ENCODE measurements at regions of chr3 and their contacts with region 1.

Region 1: GRCh38 chr3:194003125-194004057 is 132.6 kb upstream of the HES1 start:
- DNase-seq: peak; percentile 96
- H3K4me3 Mint-ChIP-seq: peak overlapping the region; percentile 67
- H3K27ac Mint-ChIP-seq: peak overlapping the region; percentile 69
- H3K4me1 Mint-ChIP-seq: peaks cover 22% of the 10 kb centered on the region
- H3K27me3 Mint-ChIP-seq: no peaks in the 10 kb centered on the region
- CTCF ChIP-seq: no peak

Region 2: GRCh38 chr3:193816590-193817311 is 186.6 kb before region 1 on chr3:
- CTCF ChIA-PET with region 1: no interaction called
- POLR2A ChIA-PET with region 1: no interaction called
- intact Hi-C with region 1: no loop called
- DNase-seq: no peak
- H3K4me3 Mint-ChIP-seq: no peak overlapping the region
- H3K27ac Mint-ChIP-seq: no peak overlapping the region
- H3K4me1 Mint-ChIP-seq: peaks cover 6% of the 10 kb centered on the region
- H3K27me3 Mint-ChIP-seq: no peaks in the 10 kb centered on the region
- CTCF ChIP-seq: no peak

Region 3: GRCh38 chr3:193837347-193837827 is 166.0 kb before region 1 on chr3:
- CTCF ChIA-PET with region 1: no interaction called
- POLR2A ChIA-PET with region 1: interaction called, 10 read pairs
- intact Hi-C with region 1: no loop called
- DNase-seq: peak; percentile 92
- H3K4me3 Mint-ChIP-seq: peak overlapping the region; percentile 61
- H3K27ac Mint-ChIP-seq: no peak overlapping the region
- H3K4me1 Mint-ChIP-seq: peaks cover 34% of the 10 kb centered on the region
- H3K27me3 Mint-ChIP-seq: no peaks in the 10 kb centered on the region
- CTCF ChIP-seq: no peak

Region 4: GRCh38 chr3:193971261-193971751 is 32.1 kb before region 1 on chr3:
- CTCF ChIA-PET with region 1: interaction called, 5 read pairs
- POLR2A ChIA-PET with region 1: interaction called, 12 read pairs
- intact Hi-C with region 1: no loop called
- DNase-seq: peak; percentile 71
- H3K4me3 Mint-ChIP-seq: no peak overlapping the region
- H3K27ac Mint-ChIP-seq: peak overlapping the region; percentile 42
- H3K4me1 Mint-ChIP-seq: peaks cover 23% of the 10 kb centered on the region
- H3K27me3 Mint-ChIP-seq: no peaks in the 10 kb centered on the region
- CTCF ChIP-seq: no peak

Region 5: DNA sequence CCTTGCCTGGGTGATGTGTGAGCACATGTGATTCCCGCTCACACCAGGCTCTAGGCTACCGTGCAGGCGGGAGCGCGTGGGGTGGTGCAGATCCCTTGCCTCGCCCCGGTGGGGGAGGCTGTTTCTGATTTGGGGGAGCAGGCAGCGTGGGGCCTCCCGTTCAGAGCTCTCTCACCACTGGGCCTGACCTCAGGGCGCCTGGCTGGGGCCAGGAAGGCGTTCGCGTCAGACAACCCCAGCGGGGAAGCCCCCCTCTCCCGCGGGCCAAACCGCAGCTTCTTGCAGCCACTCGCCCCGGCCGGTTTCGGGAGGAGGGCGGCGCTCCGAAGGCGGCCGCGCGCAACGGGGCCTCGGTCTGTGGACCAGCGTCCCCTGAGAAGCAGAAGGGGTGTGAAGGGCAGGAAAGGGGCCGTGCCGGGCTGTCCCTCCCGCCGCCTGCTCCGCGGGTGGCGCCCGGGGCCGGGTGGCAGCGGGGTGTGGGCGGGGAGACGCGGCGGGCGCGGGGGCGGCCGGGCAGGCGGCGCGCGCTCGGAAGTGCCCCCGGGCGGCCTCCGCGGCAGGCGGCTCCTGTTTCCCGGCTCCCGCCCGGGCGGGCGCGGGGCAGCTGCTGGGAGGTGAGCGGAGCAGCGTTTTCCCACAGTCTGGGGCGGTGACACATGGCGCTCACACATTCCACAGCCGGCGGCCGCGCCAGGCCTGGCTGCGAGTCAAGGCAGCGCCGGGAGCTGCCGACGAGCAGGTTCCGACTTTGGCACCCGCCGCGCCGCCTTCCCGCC is 67.4 kb after region 1 on chr3:
- CTCF ChIA-PET with region 1: no interaction called
- POLR2A ChIA-PET with region 1: interaction called, 24 read pairs
- intact Hi-C with region 1: loop called (anchors 2 kb)
- DNase-seq: peak; percentile 96
- H3K4me3 Mint-ChIP-seq: peak overlapping the region; percentile 67
- H3K27ac Mint-ChIP-seq: no peak overlapping the region
- H3K4me1 Mint-ChIP-seq: peaks cover 17% of the 10 kb centered on the region
- H3K27me3 Mint-ChIP-seq: no peaks in the 10 kb centered on the region
- CTCF ChIP-seq: no peak

Region 6: DNA sequence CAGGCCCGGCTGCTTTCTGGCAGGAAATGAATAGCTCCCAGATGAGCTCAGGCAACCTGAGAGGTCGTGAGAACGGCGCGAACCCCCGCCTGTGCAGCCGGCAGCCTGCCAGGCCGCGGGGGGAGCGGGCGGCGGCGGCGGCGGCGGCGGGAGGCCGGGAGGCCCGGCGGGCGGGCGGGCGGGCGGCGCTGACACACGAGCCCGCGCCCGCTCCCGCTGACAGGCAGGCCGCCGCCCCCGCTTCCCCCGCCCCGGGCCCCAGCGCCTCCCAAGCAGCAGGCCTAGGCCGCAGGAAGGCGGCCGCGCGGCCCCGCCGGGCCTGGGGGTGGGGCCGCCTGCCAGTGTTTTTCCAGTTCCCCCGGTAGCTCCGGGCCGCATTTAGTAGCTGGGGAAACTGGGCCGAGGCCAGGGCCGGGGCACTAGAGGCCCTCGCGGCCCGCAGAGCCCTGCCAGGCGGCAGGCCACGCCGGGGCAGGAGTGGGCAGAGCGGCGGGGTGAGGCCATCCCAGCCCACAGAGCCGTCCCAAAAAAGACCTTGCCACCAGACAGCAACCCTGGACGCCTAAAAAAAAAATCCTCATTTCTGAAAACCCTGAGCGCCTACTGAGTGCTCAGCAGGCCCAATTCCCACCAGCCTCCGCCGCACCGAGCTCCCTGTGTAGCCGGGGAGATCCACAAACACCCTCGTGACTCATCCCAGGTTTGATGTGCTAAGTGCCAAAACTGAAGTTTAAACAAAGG is 138.2 kb after region 1 on chr3:
- CTCF ChIA-PET with region 1: interaction called, 10 read pairs
- POLR2A ChIA-PET with region 1: interaction called, 100 read pairs
- intact Hi-C with region 1: no loop called
- DNase-seq: peak; percentile 97
- H3K4me3 Mint-ChIP-seq: peak overlapping the region; percentile 59
- H3K27ac Mint-ChIP-seq: peak overlapping the region; percentile 94
- H3K4me1 Mint-ChIP-seq: peaks cover 26% of the 10 kb centered on the region
- H3K27me3 Mint-ChIP-seq: no peaks in the 10 kb centered on the region
- CTCF ChIP-seq: no peak

Measured in MCF 10A (cell line).